ENCODE measurements at regions of chr10 and their contacts with region 1.

Region 1: GRCh38 chr10:32190890-32191491 is 134.8 kb upstream of the KIF5B start:
- DNase-seq: peak; percentile 71
- H3K4me3 ChIP-seq: no peak overlapping the region
- H3K27ac ChIP-seq: no peak overlapping the region
- H3K4me1 ChIP-seq: peaks cover 6% of the 10 kb centered on the region
- CTCF ChIP-seq: peak; percentile 94

Region 2: DNA sequence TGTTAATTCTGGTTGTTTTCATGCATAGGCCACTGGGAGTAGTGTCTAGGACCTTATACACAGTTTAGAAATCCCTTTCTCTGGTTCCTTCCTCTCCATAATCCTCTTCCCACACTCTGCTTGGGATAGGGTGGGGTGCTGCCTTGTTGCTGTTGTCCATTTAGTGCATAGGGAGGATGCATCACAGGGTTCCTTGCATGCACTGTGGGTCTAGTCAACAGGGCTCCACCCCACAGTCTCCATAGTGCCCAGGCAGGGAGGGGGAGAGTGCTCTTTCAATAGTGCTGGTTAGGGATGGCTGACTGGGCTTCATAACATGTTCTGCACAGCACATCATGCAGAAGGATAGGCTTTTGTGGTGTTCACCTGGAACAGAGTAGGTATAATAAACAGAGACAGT is 343.5 kb before region 1 on chr10:
- CTCF ChIA-PET with region 1: no interaction called
- POLR2A ChIA-PET with region 1: no interaction called
- intact Hi-C with region 1: loop called (anchors 10 kb)
- DNase-seq: no peak
- H3K4me3 ChIP-seq: no peak overlapping the region
- H3K27ac ChIP-seq: no peak overlapping the region
- H3K4me1 ChIP-seq: no peaks in the 10 kb centered on the region
- CTCF ChIP-seq: no peak

Region 3: GRCh38 chr10:32367793-32368453 is 176.9 kb after region 1 on chr10:
- CTCF ChIA-PET with region 1: no interaction called
- POLR2A ChIA-PET with region 1: no interaction called
- intact Hi-C with region 1: loop called (anchors 1 kb)
- DNase-seq: peak; percentile 72
- H3K4me3 ChIP-seq: no peak overlapping the region
- H3K27ac ChIP-seq: no peak overlapping the region
- H3K4me1 ChIP-seq: peaks cover 11% of the 10 kb centered on the region
- CTCF ChIP-seq: peak; percentile 93